ENCODE measurements at regions of chr2 and their contacts with region 1.

Region 1: GRCh38 chr2:42859006-42859552 is 66.7 kb upstream of the HAAO start:
- DNase-seq: no peak
- H3K4me3 ChIP-seq: no peak overlapping the region
- H3K27ac ChIP-seq: peak overlapping the region; percentile 16
- H3K4me1 ChIP-seq: peaks cover 27% of the 10 kb centered on the region
- H3K27me3 ChIP-seq: no peaks in the 10 kb centered on the region
- CTCF ChIP-seq: peak; percentile 92

Region 2: DNA sequence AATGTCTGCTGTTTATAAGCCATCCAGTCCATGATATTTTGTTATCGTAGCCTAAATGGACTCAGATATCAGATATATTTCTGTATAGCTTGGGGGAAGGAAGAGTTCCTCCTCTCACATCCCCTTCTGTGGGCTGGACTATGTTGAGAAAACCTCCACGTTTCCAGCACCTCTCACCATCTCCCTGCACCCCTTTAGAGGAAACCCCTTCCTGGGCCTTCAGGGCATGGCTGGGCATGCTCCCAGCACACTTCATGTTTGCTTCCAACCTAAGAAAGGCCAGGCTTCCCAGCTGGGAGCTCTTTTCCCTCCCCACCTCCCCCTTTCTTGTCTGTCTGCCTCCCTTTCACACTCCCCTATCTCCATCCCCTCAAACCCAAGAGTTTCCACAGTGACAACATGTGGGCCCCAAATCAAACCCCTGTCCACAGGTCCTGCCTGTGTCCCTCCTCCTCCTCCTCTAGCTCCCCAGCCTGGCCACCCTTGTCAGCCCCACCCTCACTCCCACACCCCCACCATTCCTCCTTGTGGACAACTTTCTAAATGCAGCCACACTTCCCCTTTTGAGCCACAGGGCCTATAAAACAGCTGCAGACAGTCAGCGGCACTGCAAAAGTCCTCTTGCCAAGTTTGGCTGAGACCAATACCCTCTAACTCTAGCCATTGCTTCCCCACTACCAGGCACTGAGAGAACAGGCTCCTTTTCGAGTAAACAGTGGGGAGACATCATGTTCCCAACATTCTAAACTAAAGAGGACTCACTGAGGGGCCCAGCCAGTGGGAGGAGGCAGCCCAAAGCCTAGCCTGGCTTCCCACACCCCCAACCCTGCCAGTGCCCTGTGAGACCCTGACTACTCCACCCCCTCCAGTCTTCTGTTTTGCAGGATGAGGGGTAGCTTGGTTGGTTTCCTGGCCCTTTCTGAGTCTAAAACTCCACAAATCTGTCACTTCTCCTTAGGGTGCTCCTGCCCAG is 246.8 kb after region 1 on chr2:
- intact Hi-C with region 1: loop called (anchors 5 kb)
- DNase-seq: peak; percentile 72
- H3K4me3 ChIP-seq: no peak overlapping the region
- H3K27ac ChIP-seq: peak overlapping the region; percentile 81
- H3K4me1 ChIP-seq: peaks cover 89% of the 10 kb centered on the region
- H3K27me3 ChIP-seq: no peaks in the 10 kb centered on the region
- CTCF ChIP-seq: peak; percentile 46

Region 3: GRCh38 chr2:43239981-43240761 is 381.1 kb after region 1 on chr2:
- intact Hi-C with region 1: loop called (anchors 10 kb)
- DNase-seq: no peak
- H3K4me3 ChIP-seq: no peak overlapping the region
- H3K27ac ChIP-seq: peak overlapping the region; percentile 57
- H3K4me1 ChIP-seq: no peaks in the 10 kb centered on the region
- H3K27me3 ChIP-seq: no peaks in the 10 kb centered on the region
- CTCF ChIP-seq: peak; percentile 21

Measured in left ventricle myocardium inferior (tissue), 1 donor.